B cell (primary cell): ENCODE measurements at regions of chr16 and their contacts with region 1.

Region 1: DNA sequence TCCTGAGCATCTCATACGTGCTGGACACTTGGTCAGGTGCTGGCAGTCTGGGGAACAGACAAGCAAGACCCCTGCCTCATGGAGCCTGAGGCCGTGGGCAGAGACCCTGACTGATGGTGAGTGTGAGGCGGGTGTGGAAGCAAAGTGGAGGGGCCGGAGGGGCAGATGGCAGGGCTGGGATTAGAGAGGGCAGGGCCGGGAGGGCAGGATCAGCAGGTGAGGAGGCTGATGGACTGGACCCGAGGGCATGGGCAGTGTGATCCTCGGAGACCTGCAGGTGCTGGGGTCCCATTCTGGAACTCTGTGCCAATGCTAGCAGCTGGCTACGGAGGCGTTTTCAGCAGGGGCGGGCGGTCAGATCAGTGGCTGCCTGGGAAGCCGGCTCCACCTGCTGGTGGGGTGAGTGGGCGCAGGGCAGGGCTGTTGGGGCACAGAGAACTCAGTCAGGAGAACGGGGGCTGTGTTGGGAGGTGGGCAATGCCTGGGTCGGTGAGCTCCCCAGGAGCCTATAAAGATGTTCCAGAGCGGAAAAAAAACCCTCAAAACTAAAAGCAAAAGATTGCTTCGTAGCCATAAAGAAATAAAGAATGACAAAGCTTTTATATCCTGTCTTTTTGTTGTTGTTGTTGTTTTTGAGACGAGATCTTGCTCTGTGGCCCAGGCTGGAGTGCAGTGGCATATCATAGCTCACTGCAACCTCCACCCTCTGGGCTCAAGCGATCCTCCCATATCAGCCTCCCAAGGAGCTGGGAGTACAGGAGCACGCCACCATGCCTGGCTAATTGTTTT is 8.9 kb upstream of the C16orf74 start:
- DNase-seq: peak; percentile 76
- ATAC-seq: no peak
- H3K4me3 ChIP-seq: peak overlapping the region in 4 of 5 experiments; percentile 8 to 49 (median 22)
- H3K4me3 Mint-ChIP-seq: peak overlapping the region; percentile 70
- H3K27ac ChIP-seq: peak overlapping the region; percentile 88 to 94
- H3K27ac Mint-ChIP-seq: peak overlapping the region; percentile 100
- H3K4me1 ChIP-seq: peaks cover 75 to 82% of the 10 kb centered on the region in 2 donors
- H3K4me1 Mint-ChIP-seq: peaks cover 61% of the 10 kb centered on the region
- H3K27me3 ChIP-seq: no peaks in the 10 kb centered on the region
- H3K27me3 Mint-ChIP-seq: no peaks in the 10 kb centered on the region
- CTCF ChIP-seq: peak; percentile 57

Region 2: DNA sequence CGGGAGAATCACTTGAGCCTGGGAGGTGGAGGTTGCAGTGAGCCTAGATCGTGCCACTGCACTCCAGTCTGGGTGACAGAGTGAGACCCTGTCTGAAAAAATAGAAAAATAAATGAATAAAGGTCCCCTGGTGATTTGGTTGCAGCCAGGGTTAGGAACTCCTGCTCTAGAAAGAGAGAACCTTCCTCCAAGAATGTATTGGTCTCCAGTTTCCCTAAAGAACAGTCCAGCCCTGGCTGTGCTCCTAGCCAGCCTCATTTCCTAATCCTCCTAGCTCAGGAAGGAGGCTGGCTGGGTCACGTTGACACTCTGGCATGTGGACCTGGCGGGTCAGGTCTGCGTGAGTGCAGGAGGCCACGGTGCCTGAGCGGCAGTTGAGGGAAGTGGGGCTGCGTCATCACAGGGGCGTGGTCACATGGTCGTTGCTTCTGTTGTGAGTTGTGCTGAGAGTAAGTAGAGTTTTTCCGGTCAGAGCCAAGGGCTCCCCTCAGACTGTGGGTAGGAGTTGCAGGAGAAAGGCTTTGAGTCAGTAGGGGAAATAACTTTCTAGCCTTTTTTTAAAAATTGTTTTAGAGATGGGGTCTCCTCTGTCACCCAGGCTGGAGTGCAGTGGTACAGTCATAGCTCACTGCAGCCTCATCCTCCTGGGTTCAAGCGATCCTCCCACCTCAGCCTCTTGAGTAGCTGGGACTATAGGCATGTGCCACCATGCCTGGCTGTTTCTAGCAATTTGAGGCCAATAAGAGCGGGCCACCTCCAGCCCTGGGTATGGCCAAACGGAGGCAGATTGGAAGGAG is 453.6 kb before region 1 on chr16:
- CTCF ChIA-PET with region 1: no interaction called
- POLR2A ChIA-PET with region 1: no interaction called
- intact Hi-C with region 1: no loop called
- DNase-seq: peak; percentile 91
- ATAC-seq: peak; percentile 71
- H3K4me3 ChIP-seq: peak overlapping the region in 1 of 5 experiments; percentile 22
- H3K4me3 Mint-ChIP-seq: peak overlapping the region; percentile 61
- H3K27ac ChIP-seq: peak overlapping the region; percentile 51
- H3K27ac Mint-ChIP-seq: peak overlapping the region; percentile 91
- H3K4me1 ChIP-seq: peaks cover 77 to 84% of the 10 kb centered on the region in 2 donors
- H3K4me1 Mint-ChIP-seq: peaks cover 59% of the 10 kb centered on the region
- H3K27me3 ChIP-seq: peaks cover 0 to 5% (median 0%) of the 10 kb centered on the region in 4 experiments
- H3K27me3 Mint-ChIP-seq: no peaks in the 10 kb centered on the region
- CTCF ChIP-seq: no peak

Region 3: GRCh38 chr16:85412911-85413520 is 346.8 kb before region 1 on chr16:
- CTCF ChIA-PET with region 1: no interaction called
- POLR2A ChIA-PET with region 1: no interaction called
- intact Hi-C with region 1: no loop called
- DNase-seq: no peak
- ATAC-seq: no peak
- H3K4me3 ChIP-seq: no peak overlapping the region
- H3K4me3 Mint-ChIP-seq: no peak overlapping the region
- H3K27ac ChIP-seq: no peak overlapping the region
- H3K27ac Mint-ChIP-seq: no peak overlapping the region
- H3K4me1 ChIP-seq: peaks cover 0 to 5% of the 10 kb centered on the region in 2 donors
- H3K4me1 Mint-ChIP-seq: no peaks in the 10 kb centered on the region
- H3K27me3 ChIP-seq: no peaks in the 10 kb centered on the region
- H3K27me3 Mint-ChIP-seq: no peaks in the 10 kb centered on the region
- CTCF ChIP-seq: no peak

Region 4: DNA sequence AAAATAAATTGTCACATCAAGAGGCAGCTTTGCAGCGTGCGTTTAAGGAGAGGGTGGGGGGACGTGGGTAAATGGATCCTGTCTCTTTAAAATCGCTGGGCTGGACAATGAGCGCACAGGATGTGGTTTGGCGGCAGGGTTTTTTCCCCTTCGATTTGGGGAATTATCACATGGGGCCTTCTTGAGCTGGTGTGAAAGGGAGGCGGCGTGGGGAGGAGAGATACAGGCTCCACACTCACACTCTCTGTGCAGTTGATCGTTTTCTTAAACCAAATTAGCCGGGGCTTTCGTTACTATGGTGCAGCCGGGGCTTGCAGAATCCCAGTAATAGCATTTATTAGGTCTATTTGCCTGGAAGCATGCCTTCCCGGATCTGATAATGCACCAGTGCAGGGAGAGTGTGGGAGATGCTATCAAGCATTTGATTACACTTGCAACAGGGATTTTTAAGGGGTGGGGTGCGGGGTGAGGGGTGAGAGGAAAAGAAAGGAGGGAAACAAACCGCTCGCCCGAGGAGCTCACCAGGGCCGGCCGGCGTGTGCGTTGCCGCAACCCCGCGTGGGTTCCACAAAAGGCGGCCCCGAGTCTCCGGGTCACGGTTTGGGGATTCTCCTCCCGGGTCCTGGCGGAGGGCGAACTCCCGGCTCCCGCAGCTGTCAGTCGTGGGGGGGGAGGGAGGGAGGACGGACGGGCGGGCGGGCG is 205.6 kb before region 1 on chr16:
- CTCF ChIA-PET with region 1: no interaction called
- POLR2A ChIA-PET with region 1: interaction called, 5 read pairs
- intact Hi-C with region 1: loop called (anchors 2 kb)
- DNase-seq: peak; percentile 92
- ATAC-seq: peak; percentile 61
- H3K4me3 ChIP-seq: peak overlapping the region; percentile 46 to 99 (median 87)
- H3K4me3 Mint-ChIP-seq: peak overlapping the region; percentile 92
- H3K27ac ChIP-seq: peak overlapping the region; percentile 79 to 92
- H3K27ac Mint-ChIP-seq: peak overlapping the region; percentile 95
- H3K4me1 ChIP-seq: peaks cover 21 to 33% of the 10 kb centered on the region in 2 donors
- H3K4me1 Mint-ChIP-seq: peaks cover 38% of the 10 kb centered on the region
- H3K27me3 ChIP-seq: no peaks in the 10 kb centered on the region
- H3K27me3 Mint-ChIP-seq: no peaks in the 10 kb centered on the region
- CTCF ChIP-seq: no peak

Region 5: DNA sequence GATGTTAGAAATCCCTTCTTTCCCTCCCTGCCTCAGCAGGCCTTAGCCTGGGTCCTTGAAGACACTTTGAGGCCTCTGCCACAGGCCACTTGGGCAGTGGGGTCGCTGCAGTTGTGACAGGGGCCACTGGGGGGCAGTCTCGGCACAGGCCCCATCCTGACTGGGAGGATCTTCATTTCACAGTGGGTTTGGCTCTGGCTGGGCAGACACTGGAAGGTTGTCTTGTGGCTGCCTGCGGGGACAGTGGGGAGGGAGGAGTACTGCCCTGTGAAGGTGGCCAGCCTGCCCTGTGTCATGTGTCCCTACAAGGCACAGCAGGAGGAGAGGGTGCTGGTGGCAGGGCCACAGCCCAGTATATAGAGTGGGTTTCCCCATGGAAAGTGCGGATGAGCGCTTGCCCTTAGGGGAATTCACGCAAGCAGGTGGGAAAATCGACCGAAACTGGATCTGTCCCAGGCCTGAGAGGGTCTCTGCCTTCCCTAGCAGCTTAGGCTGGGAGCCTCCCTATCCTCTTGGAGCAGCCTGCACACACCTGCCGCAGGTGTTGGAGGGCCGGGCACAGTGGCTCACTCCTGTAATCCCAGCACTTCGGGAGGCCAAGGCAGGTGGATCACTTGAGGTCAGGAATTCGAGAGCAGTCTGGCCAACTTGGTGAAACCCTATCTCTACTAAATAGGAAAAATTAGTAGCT is 99.9 kb before region 1 on chr16:
- CTCF ChIA-PET with region 1: interaction called, 58 read pairs
- POLR2A ChIA-PET with region 1: no interaction called
- intact Hi-C with region 1: loop called (anchors 1 kb)
- DNase-seq: peak; percentile 73
- ATAC-seq: peak; percentile 94
- H3K4me3 ChIP-seq: no peak overlapping the region
- H3K4me3 Mint-ChIP-seq: no peak overlapping the region
- H3K27ac ChIP-seq: no peak overlapping the region
- H3K27ac Mint-ChIP-seq: peak overlapping the region; percentile 76
- H3K4me1 ChIP-seq: no peaks in the 10 kb centered on the region
- H3K4me1 Mint-ChIP-seq: peaks cover 4% of the 10 kb centered on the region
- H3K27me3 ChIP-seq: no peaks in the 10 kb centered on the region
- H3K27me3 Mint-ChIP-seq: no peaks in the 10 kb centered on the region
- CTCF ChIP-seq: peak; percentile 90

Region 6: GRCh38 chr16:85688586-85689284 is 71.1 kb before region 1 on chr16 and contains the start of gene GINS2:
- CTCF ChIA-PET with region 1: interaction called, 14 read pairs
- POLR2A ChIA-PET with region 1: interaction called, 3 read pairs
- intact Hi-C with region 1: loop called (anchors 1 kb)
- DNase-seq: peak; percentile 93
- ATAC-seq: peak; percentile 100
- H3K4me3 ChIP-seq: peak within 1 kb of the TSS in 4 of 5 experiments; percentile 52 to 78 (median 70)
- H3K4me3 Mint-ChIP-seq: peak within 1 kb of the TSS; percentile 81
- H3K27ac ChIP-seq: no peak within 1 kb of the TSS
- H3K27ac Mint-ChIP-seq: no peak within 1 kb of the TSS
- H3K4me1 ChIP-seq: peaks cover 15 to 29% of the 10 kb centered on the region in 2 donors
- H3K4me1 Mint-ChIP-seq: peaks cover 19% of the 10 kb centered on the region
- H3K27me3 ChIP-seq: peaks cover 0 to 13% (median 5%) of the 10 kb centered on the region in 4 experiments
- H3K27me3 Mint-ChIP-seq: peaks cover 3% of the 10 kb centered on the region
- CTCF ChIP-seq: no peak
- total RNA-seq, gene GINS2: 4.2 and 4.3 TPM in 2 replicates

Region 7: DNA sequence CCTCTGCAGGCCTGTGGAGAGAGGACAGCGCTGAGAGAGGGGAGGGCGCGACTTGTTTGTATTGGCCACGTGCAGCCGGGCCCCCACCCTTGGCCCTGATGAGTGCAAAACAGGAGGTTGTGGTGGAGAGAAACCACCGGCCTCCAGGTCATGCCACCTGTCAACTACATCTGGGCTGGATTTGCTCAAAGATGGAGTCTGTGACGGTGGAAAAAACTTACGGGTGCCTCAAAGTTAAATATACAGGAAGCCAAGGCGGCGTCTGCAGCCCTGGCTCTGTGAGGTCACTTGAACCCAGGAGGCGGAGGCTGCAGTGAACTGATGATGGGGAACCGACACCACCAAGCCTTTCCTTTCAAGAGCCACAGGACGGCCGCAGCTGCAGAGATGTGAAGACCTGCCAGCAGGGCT is 24.6 kb before region 1 on chr16:
- CTCF ChIA-PET with region 1: interaction called, 33 read pairs
- POLR2A ChIA-PET with region 1: interaction called, 24 read pairs
- intact Hi-C with region 1: loop called (anchors 1 kb)
- DNase-seq: peak; percentile 68
- ATAC-seq: peak; percentile 81
- H3K4me3 ChIP-seq: peak overlapping the region in 4 of 5 experiments; percentile 3 to 38 (median 22)
- H3K4me3 Mint-ChIP-seq: peak overlapping the region; percentile 69
- H3K27ac ChIP-seq: peak overlapping the region in 1 of 2 donors; percentile 11
- H3K27ac Mint-ChIP-seq: peak overlapping the region; percentile 68
- H3K4me1 ChIP-seq: peaks cover 30 to 34% of the 10 kb centered on the region in 2 donors
- H3K4me1 Mint-ChIP-seq: peaks cover 33% of the 10 kb centered on the region
- H3K27me3 ChIP-seq: no peaks in the 10 kb centered on the region
- H3K27me3 Mint-ChIP-seq: no peaks in the 10 kb centered on the region
- CTCF ChIP-seq: no peak

Region 8: DNA sequence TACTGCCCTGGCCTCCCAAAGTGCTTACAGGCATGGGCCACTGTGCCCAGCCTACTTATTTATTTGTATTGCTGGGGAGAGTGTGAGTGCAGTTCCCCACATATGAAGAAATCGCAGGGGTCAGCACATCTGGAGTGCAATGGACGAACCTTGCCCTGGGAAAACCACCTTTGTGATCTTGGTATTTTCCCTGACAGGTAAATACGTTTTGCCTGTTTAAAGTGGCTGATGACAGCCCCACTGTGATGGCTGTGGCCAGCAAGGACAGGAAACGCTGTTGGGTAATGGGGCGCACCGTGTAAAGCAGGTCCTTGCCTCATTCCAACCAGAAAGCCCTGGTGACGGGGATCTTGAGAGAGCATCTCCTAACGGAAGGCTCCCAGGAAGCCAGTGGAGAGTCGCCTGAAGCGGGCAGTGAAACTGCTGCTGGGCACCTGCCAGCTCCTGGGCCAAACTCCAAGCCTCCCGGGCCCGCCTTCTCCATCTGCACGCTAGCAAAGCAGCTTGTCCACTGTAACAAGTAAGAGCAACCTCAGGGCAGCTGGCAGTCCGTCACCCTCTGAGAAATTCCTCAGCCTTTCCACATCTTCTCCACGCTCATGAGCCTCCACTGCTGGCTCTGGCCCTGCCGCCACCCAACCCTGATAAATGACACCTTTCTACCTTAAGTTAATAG is 22.0 kb after region 1 on chr16:
- CTCF ChIA-PET with region 1: no interaction called
- POLR2A ChIA-PET with region 1: no interaction called
- intact Hi-C with region 1: no loop called
- DNase-seq: no peak
- ATAC-seq: no peak
- H3K4me3 ChIP-seq: no peak overlapping the region
- H3K4me3 Mint-ChIP-seq: no peak overlapping the region
- H3K27ac ChIP-seq: no peak overlapping the region
- H3K27ac Mint-ChIP-seq: no peak overlapping the region
- H3K4me1 ChIP-seq: no peaks in the 10 kb centered on the region
- H3K4me1 Mint-ChIP-seq: peaks cover 5% of the 10 kb centered on the region
- H3K27me3 ChIP-seq: no peaks in the 10 kb centered on the region
- H3K27me3 Mint-ChIP-seq: no peaks in the 10 kb centered on the region
- CTCF ChIP-seq: no peak

Region 9: GRCh38 chr16:85898521-85899442 is 139.0 kb after region 1 on chr16 and contains the start of gene IRF8:
- CTCF ChIA-PET with region 1: no interaction called
- POLR2A ChIA-PET with region 1: interaction called, 3 read pairs
- intact Hi-C with region 1: loop called (anchors 5 kb)
- DNase-seq: peak; percentile 94
- ATAC-seq: peak; percentile 65
- H3K4me3 ChIP-seq: peak within 1 kb of the TSS; percentile 77 to 99 (median 88)
- H3K4me3 Mint-ChIP-seq: peak within 1 kb of the TSS; percentile 92
- H3K27ac ChIP-seq: peak within 1 kb of the TSS; percentile 93 to 97
- H3K27ac Mint-ChIP-seq: peak within 1 kb of the TSS; percentile 98
- H3K4me1 ChIP-seq: peaks cover 41 to 52% of the 10 kb centered on the region in 2 donors
- H3K4me1 Mint-ChIP-seq: peaks cover 63% of the 10 kb centered on the region
- H3K27me3 ChIP-seq: no peaks in the 10 kb centered on the region
- H3K27me3 Mint-ChIP-seq: no peaks in the 10 kb centered on the region
- CTCF ChIP-seq: no peak
- total RNA-seq, gene IRF8: 332 and 337 TPM in 2 replicates